Transverse colon (tissue), 4 donors: ENCODE measurements at regions of chr4 and their contacts with region 1.

Region 1: GRCh38 chr4:34202154-34202553 is 2042.2 kb downstream of the ARAP2 start:
- DNase-seq: no peak
- H3K4me3 ChIP-seq: no peak overlapping the region
- H3K27ac ChIP-seq: no peak overlapping the region
- H3K4me1 ChIP-seq: no peaks in the 10 kb centered on the region
- H3K27me3 ChIP-seq: no peaks in the 10 kb centered on the region
- CTCF ChIP-seq: no peak
- EP300 ChIP-seq: no peak
- POLR2A ChIP-seq: no peak

Region 2: GRCh38 chr4:33448948-33449347 is 753.2 kb before region 1 on chr4:
- in situ Hi-C with region 1: no loop called
- intact Hi-C with region 1: no loop called
- DNase-seq: no peak
- H3K4me3 ChIP-seq: no peak overlapping the region
- H3K27ac ChIP-seq: no peak overlapping the region
- H3K4me1 ChIP-seq: no peaks in the 10 kb centered on the region
- H3K27me3 ChIP-seq: no peaks in the 10 kb centered on the region
- CTCF ChIP-seq: no peak
- EP300 ChIP-seq: no peak
- POLR2A ChIP-seq: no peak

Region 3: GRCh38 chr4:33772582-33772981 is 429.6 kb before region 1 on chr4:
- in situ Hi-C with region 1: no loop called
- intact Hi-C with region 1: no loop called
- DNase-seq: no peak
- H3K4me3 ChIP-seq: no peak overlapping the region
- H3K27ac ChIP-seq: no peak overlapping the region
- H3K4me1 ChIP-seq: no peaks in the 10 kb centered on the region
- H3K27me3 ChIP-seq: no peaks in the 10 kb centered on the region
- CTCF ChIP-seq: no peak
- EP300 ChIP-seq: no peak
- POLR2A ChIP-seq: no peak

Region 4: GRCh38 chr4:34250562-34250961 is 48.4 kb after region 1 on chr4:
- in situ Hi-C with region 1: no loop called
- intact Hi-C with region 1: loop called (anchors 2 kb)
- DNase-seq: no peak
- H3K4me3 ChIP-seq: no peak overlapping the region
- H3K27ac ChIP-seq: no peak overlapping the region
- H3K4me1 ChIP-seq: no peaks in the 10 kb centered on the region
- H3K27me3 ChIP-seq: no peaks in the 10 kb centered on the region
- CTCF ChIP-seq: no peak
- EP300 ChIP-seq: no peak
- POLR2A ChIP-seq: no peak